ENCODE measurements at regions of chr2 and their contacts with region 1.

Region 1: DNA sequence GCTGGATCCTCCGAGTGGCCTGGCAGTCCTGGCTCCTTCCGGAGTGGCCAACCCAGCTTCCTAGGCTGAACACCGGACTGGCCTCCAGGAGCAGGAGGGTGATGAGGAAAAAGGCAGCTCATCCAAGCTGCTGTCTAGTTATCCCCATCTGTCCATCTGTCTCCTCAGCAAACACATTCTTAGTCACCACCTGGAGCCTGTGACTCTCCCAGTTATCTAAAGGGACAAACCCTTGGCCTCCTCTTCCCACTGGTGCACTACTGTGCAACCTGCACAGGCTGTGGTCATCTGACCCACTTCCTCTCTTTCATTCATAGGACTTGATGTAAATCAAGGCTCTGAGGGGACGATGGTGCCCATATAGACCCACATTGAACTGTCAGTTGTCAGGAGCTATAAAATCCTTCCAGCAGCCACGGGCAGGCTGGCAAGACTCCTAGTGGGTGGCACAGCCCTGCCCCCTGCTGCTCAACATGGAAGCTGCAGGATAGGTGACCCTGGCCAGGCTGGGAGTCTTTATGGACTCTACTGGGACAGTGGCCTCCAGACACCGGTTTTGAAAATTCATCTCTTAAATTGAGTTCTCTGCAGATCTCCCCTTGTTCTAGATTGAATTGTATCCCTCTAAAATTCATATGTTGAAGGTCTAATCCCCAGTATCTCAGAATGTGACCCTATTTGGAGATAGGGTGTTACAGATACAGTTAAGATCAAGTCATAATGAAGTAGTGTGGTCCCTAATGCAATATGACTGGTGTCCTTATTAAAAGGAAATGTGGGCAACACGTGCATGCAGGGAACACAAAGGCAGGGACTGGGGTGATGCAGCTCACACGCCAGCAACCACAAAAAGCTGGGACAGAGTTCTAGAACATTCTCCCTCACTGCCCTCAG is 29.3 kb upstream of the DUSP2 start:
- DNase-seq: peak; percentile 51
- ATAC-seq: peak; percentile 91
- H3K4me3 ChIP-seq: no peak overlapping the region
- H3K27ac ChIP-seq: no peak overlapping the region
- H3K4me1 ChIP-seq: peaks cover 2% of the 10 kb centered on the region; the same call in 1 of the 2 replicates
- H3K27me3 ChIP-seq: no peaks in the 10 kb centered on the region
- CTCF ChIP-seq: peak; percentile 92
- POLR2A ChIP-seq: no peak
- RAD21 ChIP-seq: peak; percentile 86

Region 2: GRCh38 chr2:96116879-96117697 is 57.4 kb before region 1 on chr2:
- CTCF ChIA-PET with region 1: no interaction called
- POLR2A ChIA-PET with region 1: no interaction called
- dilution Hi-C with region 1: no loop called
- in situ Hi-C with region 1: no loop called
- intact Hi-C with region 1: no loop called
- DNase-seq: peak; percentile 3
- ATAC-seq: peak; percentile 98
- H3K4me3 ChIP-seq: 0 out of 2 replicates have a peak overlapping the region, but pooled peaks have one; percentile 8
- H3K27ac ChIP-seq: no peak overlapping the region
- H3K4me1 ChIP-seq: peaks cover 2% of the 10 kb centered on the region; the same call in 1 of the 2 replicates
- H3K27me3 ChIP-seq: peaks cover 86% of the 10 kb centered on the region
- CTCF ChIP-seq: peak; percentile 89
- POLR2A ChIP-seq: no peak
- RAD21 ChIP-seq: peak; percentile 83

Region 3: GRCh38 chr2:96138179-96139145 is 36.0 kb before region 1 on chr2 and contains the start of gene ASTL:
- CTCF ChIA-PET with region 1: interaction called, 6 read pairs
- POLR2A ChIA-PET with region 1: no interaction called
- dilution Hi-C with region 1: no loop called
- in situ Hi-C with region 1: no loop called
- intact Hi-C with region 1: loop called (anchors 1 kb)
- DNase-seq: peak; percentile 32
- ATAC-seq: peak; percentile 77; the same call in 1 of the 2 replicates
- H3K4me3 ChIP-seq: no peak within 1 kb of the TSS
- H3K27ac ChIP-seq: no peak within 1 kb of the TSS
- H3K4me1 ChIP-seq: no peaks in the 10 kb centered on the region
- H3K27me3 ChIP-seq: peaks cover 34% of the 10 kb centered on the region
- CTCF ChIP-seq: peak; percentile 63
- POLR2A ChIP-seq: peak; percentile 33
- RAD21 ChIP-seq: peak; percentile 79
- total RNA-seq, gene ASTL: not detected in 2 replicates

Region 4: GRCh38 chr2:96208143-96209010 is 33.9 kb after region 1 on chr2 and contains the start of gene STARD7:
- CTCF ChIA-PET with region 1: interaction called, 4 read pairs
- POLR2A ChIA-PET with region 1: interaction called, 3 read pairs
- dilution Hi-C with region 1: no loop called
- in situ Hi-C with region 1: no loop called
- intact Hi-C with region 1: loop called (anchors 1 kb)
- DNase-seq: peak; percentile 97
- ATAC-seq: peak; percentile 92
- H3K4me3 ChIP-seq: peak within 1 kb of the TSS; percentile 60
- H3K27ac ChIP-seq: peak within 1 kb of the TSS; percentile 76
- H3K4me1 ChIP-seq: peaks cover 14% of the 10 kb centered on the region
- H3K27me3 ChIP-seq: no peaks in the 10 kb centered on the region
- CTCF ChIP-seq: peak; percentile 22; the same call in 1 of the 2 replicates
- POLR2A ChIP-seq: peak; percentile 89
- RAD21 ChIP-seq: peak; percentile 24; the same call in 1 of the 2 replicates
- total RNA-seq, gene STARD7: 138 and 189 TPM in 2 replicates

Region 5: GRCh38 chr2:96233436-96233835 is 58.9 kb after region 1 on chr2:
- CTCF ChIA-PET with region 1: no interaction called
- POLR2A ChIA-PET with region 1: interaction called, 11 read pairs
- dilution Hi-C with region 1: no loop called
- in situ Hi-C with region 1: no loop called
- intact Hi-C with region 1: no loop called
- DNase-seq: no peak
- ATAC-seq: no peak
- H3K4me3 ChIP-seq: no peak overlapping the region
- H3K27ac ChIP-seq: no peak overlapping the region
- H3K4me1 ChIP-seq: no peaks in the 10 kb centered on the region
- H3K27me3 ChIP-seq: no peaks in the 10 kb centered on the region
- CTCF ChIP-seq: no peak
- POLR2A ChIP-seq: no peak
- RAD21 ChIP-seq: no peak

Region 6: GRCh38 chr2:96272004-96272403 is 97.5 kb after region 1 on chr2:
- CTCF ChIA-PET with region 1: no interaction called
- POLR2A ChIA-PET with region 1: no interaction called
- dilution Hi-C with region 1: no loop called
- in situ Hi-C with region 1: no loop called
- intact Hi-C with region 1: no loop called
- DNase-seq: no peak
- ATAC-seq: no peak
- H3K4me3 ChIP-seq: no peak overlapping the region
- H3K27ac ChIP-seq: no peak overlapping the region
- H3K4me1 ChIP-seq: peaks cover 3% of the 10 kb centered on the region; the same call in 1 of the 2 replicates
- H3K27me3 ChIP-seq: no peaks in the 10 kb centered on the region
- CTCF ChIP-seq: no peak
- POLR2A ChIP-seq: no peak
- RAD21 ChIP-seq: no peak

Region 7: GRCh38 chr2:96315400-96316071 is 141.0 kb after region 1 on chr2:
- CTCF ChIA-PET with region 1: no interaction called
- POLR2A ChIA-PET with region 1: no interaction called
- dilution Hi-C with region 1: no loop called
- in situ Hi-C with region 1: no loop called
- intact Hi-C with region 1: no loop called
- DNase-seq: peak; percentile 71
- ATAC-seq: peak; percentile 78
- H3K4me3 ChIP-seq: no peak overlapping the region
- H3K27ac ChIP-seq: peak overlapping the region; percentile 17
- H3K4me1 ChIP-seq: peaks cover 12% of the 10 kb centered on the region
- H3K27me3 ChIP-seq: no peaks in the 10 kb centered on the region
- CTCF ChIP-seq: no peak
- POLR2A ChIP-seq: no peak
- RAD21 ChIP-seq: no peak